ENCODE measurements at regions of chr1 and their contacts with region 1.

Region 1: GRCh38 chr1:201511941-201512539 is 5.1 kb upstream of the CSRP1 start:
- DNase-seq: no peak
- H3K4me3 ChIP-seq: no peak overlapping the region
- H3K27me3 ChIP-seq: no peaks in the 10 kb centered on the region
- CTCF ChIP-seq: no peak

Region 2: DNA sequence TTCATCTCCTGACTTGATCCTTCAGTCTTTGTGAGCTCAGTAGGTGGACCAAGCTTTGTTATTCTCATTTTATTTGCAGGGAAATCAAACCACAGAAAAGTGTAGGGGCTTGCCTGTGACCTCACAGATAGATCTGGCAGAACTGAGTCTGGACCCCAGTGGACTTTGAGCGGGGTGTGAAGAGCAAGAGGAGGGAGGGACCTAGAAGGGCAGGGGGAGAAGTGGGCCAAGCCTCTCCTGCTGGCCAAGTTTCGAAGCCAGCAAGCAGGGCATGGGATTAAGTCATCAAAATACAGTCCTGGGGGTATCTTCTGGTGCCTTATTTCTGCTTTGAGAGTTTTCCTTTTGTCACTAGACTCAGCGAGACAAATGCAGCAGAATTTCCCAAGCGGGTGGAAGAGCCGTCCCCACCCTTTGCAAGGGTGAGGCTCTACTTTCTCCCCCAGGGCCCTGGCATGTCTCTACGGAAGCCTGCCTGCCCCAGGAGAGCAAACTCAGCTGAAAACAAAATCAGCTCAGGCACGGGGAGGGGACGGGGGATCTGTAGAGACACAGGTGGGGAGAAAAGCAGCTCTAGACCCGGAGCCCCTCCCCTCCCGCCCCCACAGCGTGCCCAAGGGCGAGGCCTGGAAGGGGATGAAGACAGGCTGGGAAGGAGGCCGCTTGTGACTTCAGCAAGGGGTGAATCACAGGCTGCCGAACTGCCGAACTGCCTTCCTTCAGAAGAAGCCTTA is 209.7 kb before region 1 on chr1:
- CTCF ChIA-PET with region 1: no interaction called
- POLR2A ChIA-PET with region 1: no interaction called
- DNase-seq: no peak
- H3K4me3 ChIP-seq: no peak overlapping the region
- H3K27me3 ChIP-seq: peaks cover 6% of the 10 kb centered on the region
- CTCF ChIP-seq: no peak

Region 3: DNA sequence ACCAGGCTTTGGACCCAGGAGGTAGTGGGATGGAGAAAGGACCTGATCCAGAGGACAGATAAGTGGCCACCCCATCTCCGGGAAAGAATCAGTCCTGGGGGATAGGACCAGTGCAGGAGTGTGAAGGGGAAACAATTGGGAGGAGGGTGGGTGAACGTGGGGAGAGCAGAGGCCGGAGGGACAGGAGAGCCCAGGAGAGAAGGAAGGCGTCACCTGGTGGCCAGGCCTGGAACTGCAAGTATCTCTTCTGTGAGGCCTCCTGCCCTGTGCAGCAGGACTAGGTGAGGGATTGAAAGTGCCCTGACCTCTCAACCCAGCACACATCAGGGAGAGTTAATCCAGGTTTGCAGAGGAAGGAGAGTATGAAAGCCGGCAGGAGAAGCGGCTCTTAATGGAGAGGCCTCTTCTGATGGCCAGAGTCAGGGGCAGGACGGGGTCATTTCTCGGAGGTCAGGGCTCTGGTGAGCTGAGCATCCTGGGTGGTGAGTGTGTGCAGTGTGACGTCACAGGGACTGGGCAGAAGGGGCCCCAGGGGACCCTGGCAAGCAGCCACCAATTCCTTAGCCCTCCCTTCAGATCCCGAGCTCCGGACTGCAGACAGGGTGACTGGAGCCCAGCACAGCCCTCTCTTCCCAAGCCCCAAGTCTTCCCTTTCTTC is 103.7 kb before region 1 on chr1:
- CTCF ChIA-PET with region 1: interaction called, 11 read pairs
- POLR2A ChIA-PET with region 1: no interaction called
- DNase-seq: peak; percentile 4
- H3K4me3 ChIP-seq: no peak overlapping the region
- H3K27me3 ChIP-seq: peaks cover 27% of the 10 kb centered on the region
- CTCF ChIP-seq: peak; percentile 99

Region 4: GRCh38 chr1:201456499-201457309 is 55.3 kb before region 1 on chr1:
- CTCF ChIA-PET with region 1: interaction called, 132 read pairs
- POLR2A ChIA-PET with region 1: interaction called, 8 read pairs
- DNase-seq: peak; percentile 93
- H3K4me3 ChIP-seq: no peak overlapping the region
- H3K27me3 ChIP-seq: no peaks in the 10 kb centered on the region
- CTCF ChIP-seq: no peak

Region 5: GRCh38 chr1:201468844-201469511 is 43.1 kb before region 1 on chr1 and contains the start of gene PHLDA3:
- CTCF ChIA-PET with region 1: interaction called, 49 read pairs
- POLR2A ChIA-PET with region 1: interaction called, 5 read pairs
- DNase-seq: peak; percentile 70
- H3K4me3 ChIP-seq: peak within 1 kb of the TSS; percentile 67
- H3K27me3 ChIP-seq: no peaks in the 10 kb centered on the region
- CTCF ChIP-seq: 0 out of 2 replicates have a peak, but pooled peaks have one; percentile 3
- polyA plus RNA-seq, gene PHLDA3: 87.3 and 130 TPM in 2 replicates

Region 6: GRCh38 chr1:201495471-201496295 is 16.4 kb before region 1 on chr1:
- CTCF ChIA-PET with region 1: interaction called, 650 read pairs
- POLR2A ChIA-PET with region 1: no interaction called
- DNase-seq: no peak
- H3K4me3 ChIP-seq: no peak overlapping the region
- H3K27me3 ChIP-seq: no peaks in the 10 kb centered on the region
- CTCF ChIP-seq: no peak

Region 7: GRCh38 chr1:201500670-201501120 is 11.3 kb before region 1 on chr1:
- CTCF ChIA-PET with region 1: interaction called, 50 read pairs
- POLR2A ChIA-PET with region 1: no interaction called
- DNase-seq: no peak
- H3K4me3 ChIP-seq: no peak overlapping the region
- H3K27me3 ChIP-seq: no peaks in the 10 kb centered on the region
- CTCF ChIP-seq: no peak

Region 8: DNA sequence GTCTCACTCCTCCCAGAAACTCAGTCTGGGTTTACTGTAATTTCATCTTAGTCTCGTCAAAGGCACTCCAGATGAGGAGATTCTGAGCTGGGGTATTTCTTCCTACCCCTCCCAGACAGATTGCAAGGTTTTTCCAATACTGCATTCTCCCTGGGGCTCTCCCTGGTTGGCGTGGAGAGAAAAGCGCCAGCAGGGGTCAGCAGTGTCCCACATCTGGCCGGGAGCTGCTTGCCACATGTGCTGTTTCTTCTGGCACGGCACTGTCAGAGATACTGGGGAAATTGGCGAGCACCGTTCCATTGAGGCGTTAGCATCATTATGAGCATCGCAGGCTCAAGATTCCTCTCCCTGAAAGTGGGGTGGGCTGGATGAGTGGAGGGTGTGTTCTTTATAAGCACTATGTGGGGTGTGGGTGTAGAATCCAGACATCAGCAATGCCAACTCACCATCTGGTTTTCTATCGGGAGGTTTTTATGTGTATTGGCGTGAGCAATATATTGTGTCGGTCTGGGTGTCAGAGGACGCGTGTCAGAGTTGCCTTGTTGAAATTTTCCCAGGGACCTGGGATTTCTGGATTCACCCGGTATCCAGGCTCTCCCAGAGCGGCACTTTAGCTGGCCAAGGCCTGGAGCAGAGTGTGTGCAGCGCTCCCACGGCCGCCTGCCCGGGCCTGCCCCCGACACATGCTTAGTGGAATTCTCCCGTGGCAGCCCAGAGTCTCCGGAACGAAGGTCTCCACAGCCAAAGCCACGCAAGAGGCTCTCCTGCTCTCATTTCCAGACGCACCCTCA is 18.9 kb after region 1 on chr1:
- CTCF ChIA-PET with region 1: interaction called, 37 read pairs
- POLR2A ChIA-PET with region 1: no interaction called
- DNase-seq: peak; percentile 81
- H3K4me3 ChIP-seq: no peak overlapping the region
- H3K27me3 ChIP-seq: no peaks in the 10 kb centered on the region
- CTCF ChIP-seq: peak; percentile 89